Naive thymus-derived CD4-positive, alpha-beta T cell (primary cell): ENCODE measurements at regions of chr11 and their contacts with region 1.

Region 1: DNA sequence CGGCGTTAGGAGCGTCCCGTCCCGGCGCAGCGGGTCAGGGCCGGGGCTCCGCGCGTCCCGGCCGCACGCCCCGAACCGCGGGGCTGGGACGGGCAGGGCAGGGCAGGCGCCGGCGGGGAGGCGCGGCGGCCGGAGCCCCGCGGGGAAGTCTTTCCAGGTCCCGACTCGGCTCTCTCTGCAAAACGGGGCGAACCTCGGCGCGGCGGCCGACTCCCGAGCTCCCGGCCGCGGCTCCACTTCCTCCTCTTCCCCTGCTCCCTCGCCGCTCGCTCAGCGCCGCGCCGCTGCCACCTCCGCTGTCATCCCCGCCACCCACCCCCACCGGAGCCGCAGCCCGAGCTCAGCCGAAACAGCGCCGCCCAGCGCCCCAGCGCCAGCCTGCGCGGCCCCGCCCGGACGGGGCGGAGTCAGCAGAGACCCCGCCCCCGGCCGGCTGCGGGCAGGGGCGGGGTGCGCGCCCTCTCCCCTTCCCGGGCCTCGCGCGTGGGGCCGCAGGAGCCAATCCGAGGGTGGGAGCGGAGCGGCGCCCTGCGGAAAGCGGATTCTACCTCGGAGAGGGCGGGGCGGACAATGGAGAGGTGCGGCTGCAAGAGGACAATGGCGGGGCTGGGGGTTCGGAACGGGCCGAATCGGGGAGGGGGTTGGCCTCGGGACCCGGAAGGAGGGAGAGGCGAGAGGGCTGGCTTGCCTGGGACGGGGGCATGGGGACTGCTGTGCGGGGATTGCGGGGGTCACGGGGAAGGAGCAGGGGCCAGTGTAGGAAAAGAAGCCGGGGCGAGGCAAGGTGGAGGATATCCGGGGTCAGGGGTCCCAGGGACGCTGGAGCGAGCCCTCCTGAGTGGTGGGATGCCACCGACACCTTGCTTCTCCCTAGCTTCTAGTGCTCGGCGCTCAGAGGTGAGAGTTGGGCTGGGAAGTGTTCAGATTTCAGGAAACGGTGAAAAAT is at the start of gene GDPD5:
- DNase-seq: peak; percentile 86 to 97 (median 91)
- ATAC-seq: peak; percentile 99
- H3K4me3 ChIP-seq: peak within 1 kb of the TSS; percentile 61
- H3K4me3 Mint-ChIP-seq: peak within 1 kb of the TSS; percentile 71 to 90 (median 84)
- H3K27ac ChIP-seq: peak within 1 kb of the TSS; percentile 71
- H3K27ac Mint-ChIP-seq: peak within 1 kb of the TSS; percentile 41 to 89 (median 74)
- H3K4me1 ChIP-seq: peaks cover 0 to 16% of the 10 kb centered on the region in 2 donors
- H3K4me1 Mint-ChIP-seq: peaks cover 10 to 37% (median 29%) of the 10 kb centered on the region in 7 donors
- H3K27me3 ChIP-seq: no peaks in the 10 kb centered on the region
- H3K27me3 Mint-ChIP-seq: peaks cover 0 to 24% (median 0%) of the 10 kb centered on the region in 5 donors
- total RNA-seq, gene GDPD5: 18.0 to 50.3 (median 24.7) TPM

Region 2: DNA sequence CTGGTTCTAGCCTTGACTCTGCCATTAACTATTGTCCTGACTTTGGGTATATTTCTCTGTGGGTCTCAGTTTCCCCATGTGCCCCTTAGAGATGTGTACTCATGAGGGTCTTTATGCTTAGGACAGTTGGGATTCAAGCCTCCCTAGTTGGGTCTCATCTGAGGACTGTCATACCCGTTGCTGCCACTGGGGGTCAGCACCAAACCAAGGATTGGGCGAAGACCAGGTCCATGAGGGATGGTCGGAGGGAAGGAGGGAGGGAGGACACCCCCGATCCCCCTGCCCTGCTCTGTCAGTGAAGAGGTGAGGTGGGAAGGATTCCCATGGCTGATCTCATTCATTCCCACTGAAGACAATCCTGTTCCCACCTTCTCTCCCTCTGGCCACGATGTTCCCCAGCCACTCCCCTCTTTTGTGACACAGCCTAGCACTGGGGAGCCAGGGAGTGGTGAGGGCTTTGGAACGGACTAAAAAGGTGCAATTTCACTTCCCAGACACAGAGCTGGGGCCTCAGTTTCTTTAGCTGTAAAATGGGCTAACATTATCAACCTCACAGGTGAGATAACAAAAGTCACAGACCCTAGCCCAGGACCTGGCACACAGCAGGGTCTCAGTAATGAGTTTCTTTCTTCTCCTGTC is 80.4 kb before region 1 on chr11:
- CTCF ChIA-PET with region 1: interaction called, 147 read pairs
- POLR2A ChIA-PET with region 1: interaction called, 3 read pairs
- intact Hi-C with region 1: loop called in 1 of 2 experiments (anchors 2 kb)
- DNase-seq: peak; percentile 38 to 76 (median 66)
- ATAC-seq: peak; percentile 90
- H3K4me3 ChIP-seq: no peak overlapping the region
- H3K4me3 Mint-ChIP-seq: no peak overlapping the region
- H3K27ac ChIP-seq: no peak overlapping the region
- H3K27ac Mint-ChIP-seq: no peak overlapping the region
- H3K4me1 ChIP-seq: no peaks in the 10 kb centered on the region
- H3K4me1 Mint-ChIP-seq: peaks cover 0 to 3% (median 0%) of the 10 kb centered on the region in 7 donors
- H3K27me3 ChIP-seq: no peaks in the 10 kb centered on the region
- H3K27me3 Mint-ChIP-seq: no peaks in the 10 kb centered on the region

Region 3: DNA sequence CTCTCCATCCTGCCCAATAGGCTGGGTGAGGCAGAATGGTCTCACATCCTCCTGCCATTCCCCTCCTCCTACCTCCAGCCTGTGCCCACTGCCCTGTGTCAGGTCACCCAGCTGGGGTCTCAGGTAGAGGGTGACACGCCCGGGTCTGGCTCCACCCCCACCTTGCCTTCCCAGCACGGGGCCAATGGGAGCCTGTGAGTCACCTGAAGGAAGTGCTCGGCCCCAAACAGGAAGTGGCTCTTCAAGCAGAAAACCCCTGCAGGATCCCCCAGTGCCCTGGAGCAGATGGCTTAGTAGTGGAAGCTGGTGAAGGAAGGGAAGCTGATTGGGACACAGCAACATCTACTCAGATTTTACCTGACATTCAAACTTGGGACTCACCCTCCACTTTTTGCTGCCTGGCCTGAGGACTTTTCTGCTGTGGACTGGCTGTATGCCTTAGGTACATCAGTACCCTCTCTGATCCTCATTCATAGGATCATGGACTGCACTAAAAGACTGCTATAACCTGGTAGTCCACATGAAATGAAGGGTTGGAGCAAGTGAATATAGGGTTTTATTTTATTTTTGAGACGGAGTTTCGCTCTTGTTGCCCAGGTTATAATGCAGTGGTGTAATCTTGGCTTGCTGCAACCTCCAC is 33.6 kb before region 1 on chr11:
- CTCF ChIA-PET with region 1: interaction called, 4 read pairs
- POLR2A ChIA-PET with region 1: interaction called, 4 read pairs
- intact Hi-C with region 1: loop called in 1 of 2 experiments (anchors 1 kb)
- DNase-seq: peak in 7 of 9 donors; percentile 12 to 52 (median 31)
- ATAC-seq: peak; percentile 90
- H3K4me3 ChIP-seq: no peak overlapping the region
- H3K4me3 Mint-ChIP-seq: peak overlapping the region; percentile 18 to 76 (median 61)
- H3K27ac ChIP-seq: peak overlapping the region; percentile 4
- H3K27ac Mint-ChIP-seq: peak overlapping the region in 8 of 9 donors; percentile 33 to 83 (median 74)
- H3K4me1 ChIP-seq: peaks cover 12 to 14% of the 10 kb centered on the region in 2 donors
- H3K4me1 Mint-ChIP-seq: peaks cover 5 to 23% (median 17%) of the 10 kb centered on the region in 7 donors
- H3K27me3 ChIP-seq: no peaks in the 10 kb centered on the region
- H3K27me3 Mint-ChIP-seq: no peaks in the 10 kb centered on the region

Region 4: DNA sequence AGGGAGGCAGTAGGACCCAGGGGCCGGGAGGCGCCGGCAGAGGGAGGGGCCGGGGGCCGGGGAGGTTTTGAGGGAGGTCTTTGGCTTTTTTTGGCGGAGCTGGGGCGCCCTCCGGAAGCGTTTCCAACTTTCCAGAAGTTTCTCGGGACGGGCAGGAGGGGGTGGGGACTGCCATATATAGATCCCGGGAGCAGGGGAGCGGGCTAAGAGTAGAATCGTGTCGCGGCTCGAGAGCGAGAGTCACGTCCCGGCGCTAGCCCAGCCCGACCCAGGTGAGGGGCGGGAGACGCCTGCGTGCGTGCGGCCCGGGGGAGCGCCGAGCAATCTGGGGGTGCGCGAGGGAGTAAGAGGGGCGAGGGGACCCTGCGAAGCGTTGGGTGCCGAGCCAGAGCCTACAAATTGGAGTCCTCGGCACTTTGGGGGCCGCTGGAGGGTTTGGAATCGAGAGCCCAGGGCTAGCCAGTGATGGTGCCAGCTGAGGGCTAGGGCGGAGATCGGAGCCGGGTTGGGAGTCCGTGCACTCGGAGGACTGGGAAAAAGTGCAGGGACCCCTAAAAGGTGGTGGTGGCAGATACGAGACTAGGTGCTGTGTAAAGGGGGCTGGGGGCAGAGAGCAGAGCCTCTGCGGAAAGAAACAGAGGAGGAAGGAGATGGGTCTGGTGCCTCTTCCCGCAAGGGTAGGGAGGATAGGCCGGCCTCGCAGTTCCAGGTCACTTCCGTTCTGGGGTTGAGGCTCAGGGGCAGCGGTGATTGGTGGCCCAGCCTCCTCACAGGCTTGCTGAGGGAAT is 36.4 kb after region 1 on chr11 and contains the start of gene SERPINH1:
- CTCF ChIA-PET with region 1: no interaction called
- POLR2A ChIA-PET with region 1: no interaction called
- intact Hi-C with region 1: loop called in 1 of 2 experiments (anchors 1 kb)
- DNase-seq: peak; percentile 29 to 73 (median 45)
- ATAC-seq: peak; percentile 80
- H3K4me3 ChIP-seq: peak within 1 kb of the TSS; percentile 91
- H3K4me3 Mint-ChIP-seq: peak within 1 kb of the TSS; percentile 94 to 99 (median 99)
- H3K27ac ChIP-seq: peak within 1 kb of the TSS; percentile 86
- H3K27ac Mint-ChIP-seq: peak within 1 kb of the TSS; percentile 87 to 97 (median 95)
- H3K4me1 ChIP-seq: peaks cover 15 to 22% of the 10 kb centered on the region in 2 donors
- H3K4me1 Mint-ChIP-seq: peaks cover 18 to 46% (median 32%) of the 10 kb centered on the region in 7 donors
- H3K27me3 ChIP-seq: no peaks in the 10 kb centered on the region
- H3K27me3 Mint-ChIP-seq: peaks cover 0 to under 1% (median 0%) of the 10 kb centered on the region in 5 donors
- total RNA-seq, gene SERPINH1: 5.1 to 19.9 (median 13.2) TPM

Region 5: DNA sequence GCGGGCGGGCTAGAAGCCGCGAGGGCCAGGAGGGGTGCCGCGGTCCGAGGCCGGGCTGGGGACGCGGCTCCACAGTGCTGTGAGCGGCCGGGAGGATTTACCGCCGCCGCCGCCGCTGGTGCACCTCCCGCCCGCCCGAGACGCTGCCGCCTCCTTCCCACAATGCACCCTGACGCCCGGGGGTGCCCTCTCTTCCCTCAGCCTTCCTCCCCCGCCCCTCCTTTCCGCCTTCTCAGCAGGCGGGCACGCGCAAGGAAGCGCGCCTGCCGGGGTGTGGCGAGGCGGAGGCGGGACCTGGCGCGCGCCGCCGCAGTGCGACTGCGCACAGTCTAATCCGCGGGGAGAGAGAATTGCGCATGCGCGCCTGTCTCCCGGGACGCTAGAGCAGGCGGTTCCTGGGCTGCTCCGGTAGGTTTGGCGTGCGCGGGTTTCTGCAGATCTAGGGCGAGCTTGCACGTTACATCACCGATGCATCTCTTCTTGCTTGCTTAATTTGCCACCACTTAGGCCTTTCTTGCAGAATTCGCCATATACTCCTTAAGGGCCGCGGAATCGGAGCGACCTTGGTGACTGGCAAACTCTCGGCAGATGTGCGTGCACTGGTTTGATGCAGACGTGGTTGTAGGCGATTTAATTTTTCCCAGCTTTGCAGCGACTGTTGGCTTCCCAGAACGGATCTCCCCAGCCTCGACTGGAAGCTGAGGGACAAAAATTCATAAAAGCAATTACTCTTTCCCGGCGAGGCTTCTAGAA is 855.3 kb after region 1 on chr11 and contains the starts of genes GVQW3 and THAP12:
- CTCF ChIA-PET with region 1: no interaction called
- POLR2A ChIA-PET with region 1: no interaction called
- intact Hi-C with region 1: loop called in 1 of 2 experiments (anchors 5 kb)
- DNase-seq: peak; percentile 96 to 99 (median 98)
- ATAC-seq: peak; percentile 96
- H3K4me3 ChIP-seq: peak within 1 kb of the TSS; percentile 86
- H3K4me3 Mint-ChIP-seq: peak within 1 kb of the TSS; percentile 92 to 98 (median 97)
- H3K27ac ChIP-seq: peak within 1 kb of the TSS; percentile 72
- H3K27ac Mint-ChIP-seq: peak within 1 kb of the TSS; percentile 75 to 98 (median 92)
- H3K4me1 ChIP-seq: peaks cover 22 to 43% of the 10 kb centered on the region in 2 donors
- H3K4me1 Mint-ChIP-seq: peaks cover 51 to 76% (median 69%) of the 10 kb centered on the region in 7 donors
- H3K27me3 ChIP-seq: no peaks in the 10 kb centered on the region
- H3K27me3 Mint-ChIP-seq: no peaks in the 10 kb centered on the region
- total RNA-seq, gene GVQW3: 3.6 to 9.1 (median 6.7) TPM
- total RNA-seq, gene THAP12: 40.3 to 57.9 (median 51.1) TPM